Activated T-helper 1 cell treated with anti-CD3 and anti-CD28 coated beads, Interleukin-12 subunit alpha, Interleukin-12 subunit beta, Interleukin-2, Interleukin-4 antibody, amounts not matched to agents 30 ng/mL and 10 ng/mL and 1 ng/mL, durations not matched to agents 14 hours and 24 hours and 36 hours (primary cell): ENCODE measurements at regions of chr20 and their contacts with region 1.

Region 1: DNA sequence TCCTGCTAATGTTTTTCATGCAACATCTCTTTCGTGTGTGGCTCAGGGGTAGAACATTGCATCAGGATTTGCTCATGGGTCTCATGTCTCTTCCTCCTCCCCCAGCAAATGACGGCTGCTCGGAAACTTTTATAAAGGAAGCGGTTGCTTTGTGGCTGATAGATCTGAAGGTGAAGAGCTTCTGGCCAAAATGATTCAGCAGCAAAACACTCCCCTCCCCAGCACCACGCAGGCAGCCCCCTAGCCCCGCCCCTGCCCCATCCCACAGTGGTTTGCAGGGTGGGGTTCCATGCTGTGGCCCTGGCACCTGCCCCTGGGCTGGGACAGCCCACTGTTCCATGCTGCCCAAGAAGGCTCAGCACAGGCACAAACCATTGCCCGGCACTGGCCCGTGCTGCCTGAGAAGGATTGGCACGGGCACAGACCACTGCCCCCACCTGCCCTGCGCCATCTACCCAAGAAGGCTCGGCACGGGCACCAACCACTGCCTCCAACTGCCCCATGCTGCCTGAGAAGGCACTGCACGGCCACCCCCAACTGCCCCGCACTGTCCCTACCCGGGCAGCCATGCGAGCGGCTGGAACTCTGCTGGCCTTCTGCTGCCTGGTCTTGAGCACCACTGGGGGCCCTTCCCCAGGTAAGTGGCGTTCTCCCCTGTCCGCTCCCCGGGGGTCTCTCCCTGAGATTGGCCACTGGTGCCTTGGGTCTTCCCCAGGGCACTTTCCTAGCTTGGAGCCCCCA is at the start of gene CST7:
- DNase-seq: peak; percentile 81
- H3K4me3 Mint-ChIP-seq: peak within 1 kb of the TSS; percentile 90
- H3K27ac Mint-ChIP-seq: peak within 1 kb of the TSS; percentile 99
- H3K4me1 Mint-ChIP-seq: peaks cover 74% of the 10 kb centered on the region
- H3K27me3 Mint-ChIP-seq: no peaks in the 10 kb centered on the region
- total RNA-seq, gene CST7: 127 and 133 TPM in 2 replicates

Region 2: GRCh38 chr20:24934101-24934661 is 14.9 kb before region 1 on chr20:
- intact Hi-C with region 1: loop called (anchors 2 kb)
- DNase-seq: no peak
- H3K4me3 Mint-ChIP-seq: no peak overlapping the region
- H3K27ac Mint-ChIP-seq: no peak overlapping the region
- H3K4me1 Mint-ChIP-seq: peaks cover 46% of the 10 kb centered on the region
- H3K27me3 Mint-ChIP-seq: no peaks in the 10 kb centered on the region

Region 3: DNA sequence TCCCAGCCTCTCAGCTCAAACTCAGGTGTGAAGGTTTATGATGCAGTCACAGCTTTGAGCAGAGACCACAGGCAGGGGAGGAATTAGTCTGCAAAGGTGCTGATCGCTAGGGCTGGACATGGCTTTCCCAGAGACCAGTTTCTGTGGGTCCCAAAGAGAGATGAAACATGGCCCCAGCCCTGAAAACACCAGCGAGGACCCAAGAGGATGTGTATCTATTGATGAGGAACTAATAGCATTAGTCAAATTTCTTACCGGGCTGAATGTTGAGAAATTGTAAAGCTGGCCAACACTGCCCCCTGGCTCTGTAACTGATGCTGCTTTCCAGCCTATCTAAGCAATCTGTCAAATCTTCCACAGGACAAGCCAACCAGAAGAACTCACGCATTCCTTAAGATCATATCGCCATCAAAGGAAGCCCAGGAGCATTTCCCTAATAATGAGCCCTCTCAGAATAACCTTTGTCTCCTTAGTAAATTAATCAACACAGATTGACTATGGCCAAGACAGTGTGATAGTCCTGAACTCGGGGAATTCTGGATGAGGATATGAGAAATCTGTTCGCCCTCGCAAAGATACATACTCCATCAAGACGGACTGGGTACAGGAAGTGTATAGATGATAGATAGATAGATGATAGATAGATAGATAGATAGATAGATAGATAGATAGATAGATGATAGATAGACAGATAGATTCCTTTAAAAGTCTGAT is 116.7 kb after region 1 on chr20:
- intact Hi-C with region 1: loop called (anchors 1 kb)
- DNase-seq: peak; percentile 21
- H3K4me3 Mint-ChIP-seq: no peak overlapping the region
- H3K27ac Mint-ChIP-seq: no peak overlapping the region
- H3K4me1 Mint-ChIP-seq: peaks cover 4% of the 10 kb centered on the region
- H3K27me3 Mint-ChIP-seq: peaks cover 53% of the 10 kb centered on the region

Region 4: DNA sequence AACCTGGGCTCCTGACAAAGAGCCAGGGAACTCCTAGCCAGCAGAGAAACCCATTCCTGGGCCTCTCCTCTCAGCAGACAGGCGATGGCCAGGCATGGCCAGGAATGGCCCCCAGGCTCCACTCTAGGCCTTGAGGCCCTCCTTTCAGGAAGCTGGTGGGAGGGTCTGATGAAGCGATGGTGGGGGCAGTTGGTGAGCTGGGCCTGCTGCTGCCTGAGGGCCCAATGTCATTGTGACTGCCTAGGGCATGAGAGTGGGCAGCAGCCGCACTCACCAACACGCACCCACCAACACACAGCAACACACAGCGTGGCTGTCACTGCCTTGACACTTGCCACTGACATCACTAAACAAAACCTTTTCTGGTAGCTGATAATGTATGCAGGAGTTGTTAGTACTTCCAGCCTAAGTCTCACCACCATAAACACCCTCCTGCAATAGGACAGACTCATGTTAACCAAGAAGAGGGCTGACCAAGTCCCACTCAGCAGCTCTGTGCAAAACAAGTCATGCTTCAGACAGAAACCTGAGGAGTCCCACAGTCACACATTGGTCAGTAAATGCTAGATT is 372.2 kb after region 1 on chr20:
- intact Hi-C with region 1: loop called (anchors 1 kb)
- DNase-seq: no peak
- H3K4me3 Mint-ChIP-seq: no peak overlapping the region
- H3K27ac Mint-ChIP-seq: peak overlapping the region; percentile 56
- H3K4me1 Mint-ChIP-seq: peaks cover 15% of the 10 kb centered on the region
- H3K27me3 Mint-ChIP-seq: no peaks in the 10 kb centered on the region